Activated CD4-positive, alpha-beta T cell treated with anti-CD3 and anti-CD28 coated beads for 36 hours (primary cell): ENCODE measurements at regions of chrX and their contacts with region 1.

Region 1: DNA sequence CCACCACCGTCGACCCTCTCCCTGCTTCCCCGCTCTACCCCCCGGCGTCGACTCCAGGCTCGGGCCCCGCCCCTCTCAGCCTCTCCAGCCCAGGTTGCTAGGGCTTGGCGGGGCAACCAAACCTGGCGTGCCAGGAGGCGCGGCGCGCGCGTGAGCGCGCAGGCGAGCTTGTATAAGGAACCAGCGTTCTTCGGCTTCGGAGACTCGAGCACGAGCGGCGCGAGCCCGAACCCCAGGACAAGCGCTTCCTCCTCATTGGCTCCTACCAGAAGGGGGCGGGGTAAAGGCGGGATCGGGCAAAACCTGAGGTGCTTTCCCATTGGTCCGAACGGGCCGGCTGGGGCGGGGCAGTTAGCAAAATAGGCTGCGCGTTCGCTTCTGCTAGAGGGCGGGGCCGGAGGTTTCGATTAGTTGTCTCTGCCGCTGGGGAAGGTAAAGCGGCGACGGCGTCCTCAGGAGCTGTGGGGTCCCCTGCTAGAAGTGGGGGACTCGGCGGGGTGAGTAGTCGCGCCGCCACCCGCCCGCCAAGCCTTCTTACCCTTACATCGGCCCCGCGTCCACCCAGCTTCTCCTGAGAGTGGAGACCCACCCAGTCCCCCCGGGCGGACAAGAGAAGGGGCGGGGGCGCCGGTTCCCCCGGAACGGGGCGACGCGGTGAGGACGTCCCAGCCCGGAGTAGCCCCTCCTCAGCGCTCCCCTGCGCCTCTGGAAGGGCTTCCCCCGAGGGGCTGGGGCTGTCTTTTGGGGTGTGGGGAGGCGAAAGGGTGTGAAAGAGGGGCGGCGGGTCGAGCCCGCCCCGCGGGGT is at the start of gene CDKL5:
- DNase-seq: peak; percentile 97
- ATAC-seq: peak; percentile 96
- H3K4me3 Mint-ChIP-seq: peak within 1 kb of the TSS; percentile 79
- H3K27ac Mint-ChIP-seq: peak within 1 kb of the TSS; percentile 60
- H3K4me1 Mint-ChIP-seq: peaks cover 2% of the 10 kb centered on the region
- H3K27me3 Mint-ChIP-seq: peaks cover 2% of the 10 kb centered on the region
- total RNA-seq, gene CDKL5: 1.2 to 1.5 TPM

Region 2: DNA sequence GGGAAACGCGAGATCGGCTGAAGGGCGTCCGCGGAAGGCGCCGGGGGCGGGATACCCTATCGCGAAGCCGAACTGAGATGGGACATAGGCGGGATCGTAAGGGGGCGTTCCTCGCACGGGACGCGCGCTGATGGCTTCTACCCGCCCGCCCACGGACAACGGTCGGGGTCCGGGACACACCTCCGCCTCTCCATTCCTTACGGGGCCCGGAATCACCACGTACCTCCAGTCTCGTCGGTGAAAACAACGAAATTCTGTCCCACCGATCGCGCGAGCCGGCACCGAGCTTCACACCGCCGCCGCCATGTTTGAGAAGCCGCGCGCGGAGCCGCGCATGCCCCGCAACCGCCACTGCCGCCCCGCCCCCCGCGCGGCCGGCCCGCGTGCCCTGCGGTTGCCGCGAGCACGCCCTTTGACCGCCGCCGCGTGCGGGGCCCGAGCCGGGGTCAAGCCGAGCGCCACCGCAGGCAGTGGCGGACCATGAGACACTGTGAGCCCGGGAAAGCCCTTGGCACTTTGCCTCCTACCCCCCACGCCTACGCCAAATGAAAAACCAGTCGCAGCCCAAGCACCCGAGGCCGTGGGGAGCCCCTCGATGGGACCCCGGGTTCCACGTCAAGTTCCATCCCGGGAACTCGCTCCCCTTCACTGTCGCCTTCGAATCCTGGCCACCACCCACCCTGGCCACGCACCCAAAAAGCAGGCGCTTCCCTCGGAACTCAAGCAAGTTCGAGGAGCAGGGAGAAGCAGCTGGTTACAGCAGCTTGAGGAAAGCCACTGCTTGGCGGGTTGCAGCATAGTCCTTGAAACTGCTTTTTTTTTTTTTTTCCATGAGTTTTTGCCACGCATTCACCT is 70.8 kb before region 1 on chrX and contains the start of gene SCML2:
- CTCF ChIA-PET with region 1: no interaction called
- POLR2A ChIA-PET with region 1: no interaction called
- intact Hi-C with region 1: loop called in 1 of 2 experiments (anchors 2 kb)
- DNase-seq: peak; percentile 62
- ATAC-seq: peak; percentile 69
- H3K4me3 Mint-ChIP-seq: peak within 1 kb of the TSS; percentile 68
- H3K27ac Mint-ChIP-seq: no peak within 1 kb of the TSS
- H3K4me1 Mint-ChIP-seq: peaks cover 4% of the 10 kb centered on the region
- H3K27me3 Mint-ChIP-seq: peaks cover 2% of the 10 kb centered on the region
- total RNA-seq, gene SCML2: 2.9 to 3.1 TPM

Region 3: GRCh38 chrX:18674788-18675735 is 249.7 kb after region 1 on chrX:
- CTCF ChIA-PET with region 1: interaction called, 3 read pairs
- POLR2A ChIA-PET with region 1: no interaction called
- intact Hi-C with region 1: loop called (anchors 1 to 10 kb)
- DNase-seq: peak; percentile 82
- ATAC-seq: peak; percentile 81
- H3K4me3 Mint-ChIP-seq: peak overlapping the region; percentile 63
- H3K27ac Mint-ChIP-seq: peak overlapping the region; percentile 80
- H3K4me1 Mint-ChIP-seq: peaks cover 6% of the 10 kb centered on the region
- H3K27me3 Mint-ChIP-seq: no peaks in the 10 kb centered on the region